ENCODE measurements at regions of chr2 and their contacts with region 1.

Region 1: GRCh38 chr2:25276569-25277465 is 64.9 kb downstream of the DNMT3A start:
- DNase-seq: peak; percentile 90
- ATAC-seq: peak; percentile 66
- H3K4me3 Mint-ChIP-seq: peak overlapping the region; percentile 57
- H3K27ac Mint-ChIP-seq: peak overlapping the region; percentile 96
- H3K4me1 Mint-ChIP-seq: peaks cover 76% of the 10 kb centered on the region
- H3K27me3 Mint-ChIP-seq: no peaks in the 10 kb centered on the region
- CTCF ChIP-seq: peak; percentile 97

Region 2: DNA sequence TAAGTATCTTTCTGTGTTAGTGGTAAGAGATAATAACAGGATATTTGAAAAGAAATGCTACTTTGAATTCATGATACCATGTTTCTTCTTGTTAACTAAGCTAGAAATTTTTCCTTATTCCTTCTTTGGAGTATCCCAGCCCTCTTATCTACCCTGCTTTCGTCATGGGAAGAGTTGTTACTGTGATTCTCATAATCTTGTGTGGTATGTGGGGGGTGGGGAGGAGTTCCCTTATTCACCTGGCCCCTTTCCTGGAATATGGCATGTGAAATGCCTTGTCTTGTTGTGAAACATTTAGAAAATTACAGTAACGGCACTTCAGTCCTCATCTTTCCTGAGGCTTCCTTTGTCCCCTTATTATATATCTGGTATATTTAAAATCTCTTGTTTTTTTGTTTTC is 655.9 kb before region 1 on chr2:
- CTCF ChIA-PET with region 1: no interaction called
- POLR2A ChIA-PET with region 1: no interaction called
- intact Hi-C with region 1: no loop called
- DNase-seq: no peak
- ATAC-seq: no peak
- H3K4me3 Mint-ChIP-seq: no peak overlapping the region
- H3K27ac Mint-ChIP-seq: no peak overlapping the region
- H3K4me1 Mint-ChIP-seq: peaks cover 42% of the 10 kb centered on the region
- H3K27me3 Mint-ChIP-seq: no peaks in the 10 kb centered on the region
- CTCF ChIP-seq: no peak

Region 3: DNA sequence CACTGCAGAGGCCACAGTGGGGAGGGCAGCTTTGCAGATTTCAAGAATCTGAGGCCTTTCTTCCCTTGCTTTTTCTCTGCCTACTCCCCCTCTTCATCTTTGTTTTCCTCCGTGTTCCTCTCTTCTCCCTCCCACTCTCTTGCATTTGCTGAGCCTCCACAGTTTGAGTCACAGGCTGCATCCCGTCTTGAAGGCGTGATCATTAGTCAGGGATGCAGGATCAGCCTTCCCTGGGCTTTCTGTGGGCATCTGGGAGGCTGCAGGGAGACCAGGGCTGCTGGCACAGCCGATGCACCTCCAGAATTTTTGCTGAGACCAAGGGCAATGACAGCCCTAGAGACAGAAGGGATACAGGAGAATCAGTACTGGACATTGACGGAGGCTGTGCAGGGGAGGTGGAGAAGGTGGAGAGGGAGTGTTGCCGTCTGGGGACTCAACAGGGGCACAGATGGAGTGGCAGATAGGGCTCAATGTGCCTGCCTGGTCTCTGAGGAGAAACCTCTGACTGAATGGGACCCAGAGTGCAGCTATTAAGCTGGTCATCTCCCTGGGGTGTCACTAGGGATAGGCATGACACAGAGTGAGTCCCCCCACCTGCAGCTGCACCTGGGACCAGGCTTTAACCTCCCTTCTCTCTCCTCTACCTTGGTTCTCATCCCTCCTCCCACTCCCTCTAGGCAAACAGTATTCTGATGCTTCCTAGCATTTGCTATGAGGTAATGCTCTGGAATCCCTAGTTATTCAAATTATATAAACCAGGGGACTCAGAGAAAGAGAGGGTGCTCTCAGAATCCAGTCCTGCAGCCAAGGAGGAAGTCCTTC is 276.1 kb before region 1 on chr2:
- CTCF ChIA-PET with region 1: no interaction called
- POLR2A ChIA-PET with region 1: no interaction called
- intact Hi-C with region 1: no loop called
- DNase-seq: no peak
- ATAC-seq: no peak
- H3K4me3 Mint-ChIP-seq: no peak overlapping the region
- H3K27ac Mint-ChIP-seq: no peak overlapping the region
- H3K4me1 Mint-ChIP-seq: no peaks in the 10 kb centered on the region
- H3K27me3 Mint-ChIP-seq: peaks cover 3% of the 10 kb centered on the region
- CTCF ChIP-seq: no peak

Region 4: DNA sequence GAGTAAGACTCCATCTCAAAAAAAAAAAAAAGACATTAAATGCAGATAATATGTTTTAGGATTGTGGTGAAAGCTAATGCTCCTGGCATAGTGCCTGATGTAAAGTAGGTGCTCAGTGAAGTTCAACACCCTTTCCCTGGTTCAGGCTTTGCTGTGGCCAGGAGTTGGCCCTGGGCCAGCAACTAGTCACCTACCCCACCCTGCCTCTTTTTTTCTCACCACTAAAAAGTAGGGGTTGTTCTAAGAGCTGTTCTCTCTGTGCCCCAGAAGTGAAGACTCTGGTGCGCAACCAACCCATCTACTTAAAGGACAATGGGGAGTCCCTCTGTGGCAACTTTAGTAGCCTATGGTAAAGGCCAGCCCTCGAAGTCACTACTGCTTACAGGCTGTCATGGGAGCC is 11.0 kb before region 1 on chr2:
- CTCF ChIA-PET with region 1: interaction called, 21 read pairs
- POLR2A ChIA-PET with region 1: interaction called, 8 read pairs
- intact Hi-C with region 1: no loop called
- DNase-seq: no peak
- ATAC-seq: peak; percentile 37
- H3K4me3 Mint-ChIP-seq: no peak overlapping the region
- H3K27ac Mint-ChIP-seq: peak overlapping the region; percentile 30
- H3K4me1 Mint-ChIP-seq: peaks cover 27% of the 10 kb centered on the region
- H3K27me3 Mint-ChIP-seq: no peaks in the 10 kb centered on the region
- CTCF ChIP-seq: no peak

Region 5: DNA sequence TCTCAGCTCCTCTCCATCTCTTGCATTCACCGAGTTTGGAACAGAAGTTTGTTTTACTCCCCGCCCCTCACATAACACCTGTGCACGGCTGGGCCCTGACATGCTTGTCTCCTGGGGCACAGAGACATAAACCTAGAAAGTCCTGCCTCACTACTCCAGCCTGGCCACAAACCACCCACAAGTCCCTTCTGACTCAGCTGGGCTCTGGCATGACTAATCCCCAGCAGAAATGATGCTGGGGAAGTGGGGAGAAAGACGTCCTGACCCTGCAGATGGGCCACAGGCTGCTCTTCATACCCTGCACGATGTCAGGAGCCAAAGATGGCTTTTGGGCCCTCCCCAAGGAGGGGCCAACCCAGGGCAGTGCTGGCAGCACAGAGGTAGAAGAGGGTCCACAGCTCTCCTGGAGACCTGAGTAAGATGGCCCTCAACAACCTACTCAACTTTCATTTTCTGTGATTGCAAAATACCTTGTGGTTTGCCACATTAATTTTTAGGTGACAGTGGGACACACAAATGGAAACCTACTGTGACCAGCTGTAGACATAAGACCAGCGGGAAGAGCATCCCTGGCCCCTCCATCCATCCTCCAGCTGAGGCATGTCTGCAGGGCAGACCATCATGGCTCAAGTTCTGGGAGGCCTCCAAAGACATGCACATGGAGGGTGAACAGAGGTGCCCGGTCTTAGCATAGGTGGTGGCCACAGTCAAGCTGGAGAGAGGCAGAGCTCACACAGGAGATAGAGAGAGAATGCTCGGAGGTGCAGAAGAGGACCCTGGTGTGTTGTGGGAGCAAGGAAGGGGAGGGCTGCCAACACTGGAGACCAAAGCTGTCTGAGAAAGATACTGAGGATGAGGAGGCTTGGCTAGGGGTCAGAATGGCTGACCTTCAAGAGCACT is 24.9 kb after region 1 on chr2:
- CTCF ChIA-PET with region 1: interaction called, 19 read pairs
- POLR2A ChIA-PET with region 1: interaction called, 22 read pairs
- intact Hi-C with region 1: no loop called
- DNase-seq: peak; percentile 94
- ATAC-seq: peak; percentile 97
- H3K4me3 Mint-ChIP-seq: peak overlapping the region; percentile 17
- H3K27ac Mint-ChIP-seq: peak overlapping the region; percentile 63
- H3K4me1 Mint-ChIP-seq: peaks cover 81% of the 10 kb centered on the region
- H3K27me3 Mint-ChIP-seq: no peaks in the 10 kb centered on the region
- CTCF ChIP-seq: no peak

Region 6: GRCh38 chr2:25331686-25332365 is 55.0 kb after region 1 on chr2:
- CTCF ChIA-PET with region 1: interaction called, 10 read pairs
- POLR2A ChIA-PET with region 1: interaction called, 11 read pairs
- intact Hi-C with region 1: no loop called
- DNase-seq: peak; percentile 89
- ATAC-seq: peak; percentile 91
- H3K4me3 Mint-ChIP-seq: no peak overlapping the region
- H3K27ac Mint-ChIP-seq: peak overlapping the region; percentile 80
- H3K4me1 Mint-ChIP-seq: peaks cover 71% of the 10 kb centered on the region
- H3K27me3 Mint-ChIP-seq: no peaks in the 10 kb centered on the region
- CTCF ChIP-seq: no peak

Region 7: DNA sequence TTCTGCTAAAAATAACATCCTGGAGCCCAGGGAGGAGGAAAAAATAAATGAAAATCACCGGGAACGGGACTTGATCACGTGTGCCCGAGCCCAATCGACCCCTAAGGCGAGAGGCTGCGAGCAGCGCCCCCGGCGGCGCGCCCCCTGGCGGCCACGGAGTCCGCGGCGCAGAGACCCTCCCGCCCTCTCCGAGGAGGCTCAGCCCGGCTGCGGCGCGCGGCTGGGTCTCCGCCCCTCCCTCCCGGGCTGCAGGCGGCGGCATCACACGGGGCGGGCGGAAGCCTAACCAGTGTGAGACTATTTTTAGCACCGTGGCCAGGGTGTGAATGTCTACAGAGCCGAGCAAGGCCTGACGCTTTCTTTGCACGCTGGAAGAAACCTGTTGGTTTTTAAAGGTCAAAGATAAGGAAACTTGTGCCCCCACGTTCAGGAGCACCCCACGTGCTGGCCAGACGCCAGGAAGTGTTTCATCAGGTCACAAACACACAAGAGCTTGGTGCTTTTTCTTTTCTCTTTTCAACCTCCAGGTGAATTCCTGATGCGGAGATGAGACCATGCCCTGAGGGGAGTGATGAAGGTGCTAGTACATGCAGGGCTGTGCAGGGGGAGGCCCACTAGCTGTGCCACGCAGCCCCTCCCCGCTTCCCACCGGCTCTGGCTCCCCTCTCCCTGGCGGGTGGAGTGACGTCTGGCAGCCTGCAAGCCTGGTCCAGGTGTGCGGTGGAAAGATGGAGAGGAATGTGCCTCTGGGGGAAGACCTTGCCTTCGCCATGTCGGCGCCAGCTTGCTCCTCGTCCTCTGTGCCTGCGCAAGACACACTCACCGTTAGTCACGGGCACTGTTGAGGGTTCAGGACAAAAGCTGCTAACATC is 100.2 kb after region 1 on chr2:
- CTCF ChIA-PET with region 1: interaction called, 19 read pairs
- POLR2A ChIA-PET with region 1: interaction called, 3 read pairs
- intact Hi-C with region 1: no loop called
- DNase-seq: peak; percentile 99
- ATAC-seq: peak; percentile 97
- H3K4me3 Mint-ChIP-seq: peak overlapping the region; percentile 79
- H3K27ac Mint-ChIP-seq: peak overlapping the region; percentile 97
- H3K4me1 Mint-ChIP-seq: peaks cover 42% of the 10 kb centered on the region
- H3K27me3 Mint-ChIP-seq: no peaks in the 10 kb centered on the region
- CTCF ChIP-seq: peak; percentile 95

Measured in activated CD8-positive, alpha-beta T cell treated with anti-CD3 and anti-CD28 coated beads for 36 hours (primary cell).